ENCODE measurements at regions of chr17 and their contacts with region 1.

Region 1: DNA sequence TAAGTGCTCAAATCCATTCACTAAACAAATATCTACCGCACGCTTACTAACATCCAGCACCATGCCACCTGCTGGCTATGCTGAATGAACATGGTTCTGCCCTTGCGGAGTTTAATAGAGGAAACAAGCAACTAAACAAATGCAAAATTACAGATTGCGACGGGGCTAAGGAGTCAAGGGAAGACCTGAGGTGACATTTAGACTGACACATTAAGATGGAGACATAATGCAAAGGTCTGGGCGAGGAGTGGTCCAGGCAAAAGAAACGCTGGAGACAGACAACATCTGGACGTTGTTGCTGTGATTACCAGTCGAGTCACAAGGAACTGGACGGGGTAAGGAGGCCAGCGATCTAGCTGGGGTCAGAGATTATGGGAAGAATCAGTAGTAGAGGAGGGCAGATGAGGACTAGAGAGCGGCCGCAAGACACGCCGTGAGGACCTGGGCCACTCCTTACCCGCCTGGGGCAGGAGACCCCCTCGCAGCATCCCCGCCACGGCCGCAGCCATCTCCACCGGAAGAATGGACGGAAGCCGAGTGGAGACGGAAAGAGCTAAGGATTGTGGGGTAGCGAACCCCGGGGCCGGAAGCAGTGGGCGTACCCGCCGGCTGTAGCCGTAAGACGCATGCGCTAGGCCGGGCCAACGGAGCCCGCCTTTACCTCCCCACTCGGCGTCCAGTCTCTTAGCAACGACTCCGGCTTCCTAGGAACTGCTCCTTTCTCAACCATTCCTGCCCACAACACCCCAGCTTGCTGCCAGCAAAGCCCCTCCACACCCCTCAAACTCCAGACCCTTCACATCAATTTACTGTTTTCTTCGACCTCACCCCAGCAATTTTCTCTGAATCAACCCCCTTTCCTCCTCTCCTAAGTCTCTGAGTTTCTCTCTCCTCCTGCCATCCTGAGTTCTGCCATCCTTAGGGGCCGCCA is at the starts of genes LRRC46 and MRPL10:
- DNase-seq: peak; percentile 97 to 99
- H3K4me3 ChIP-seq: peak within 1 kb of the TSS; percentile 54
- H3K4me3 Mint-ChIP-seq: peak within 1 kb of the TSS; percentile 89
- H3K27ac Mint-ChIP-seq: peak within 1 kb of the TSS; percentile 84
- H3K4me1 ChIP-seq: peaks cover 9% of the 10 kb centered on the region
- H3K4me1 Mint-ChIP-seq: peaks cover 16% of the 10 kb centered on the region
- H3K27me3 ChIP-seq: no peaks in the 10 kb centered on the region
- H3K27me3 Mint-ChIP-seq: no peaks in the 10 kb centered on the region
- CTCF ChIP-seq: peak; percentile 54 to 80
- total RNA-seq, gene LRRC46: 1.4 and 2.3 TPM in 2 replicates
- total RNA-seq, gene MRPL10: 159 and 162 TPM in 2 replicates

Region 2: GRCh38 chr17:47120521-47121095 is 710.7 kb before region 1 on chr17:
- CTCF ChIA-PET with region 1: no interaction called
- POLR2A ChIA-PET with region 1: interaction called, 15 read pairs
- intact Hi-C with region 1: no loop called
- DNase-seq: no peak
- H3K4me3 ChIP-seq: no peak overlapping the region
- H3K4me3 Mint-ChIP-seq: no peak overlapping the region
- H3K27ac Mint-ChIP-seq: no peak overlapping the region
- H3K4me1 ChIP-seq: no peaks in the 10 kb centered on the region
- H3K4me1 Mint-ChIP-seq: no peaks in the 10 kb centered on the region
- H3K27me3 ChIP-seq: no peaks in the 10 kb centered on the region
- H3K27me3 Mint-ChIP-seq: no peaks in the 10 kb centered on the region
- CTCF ChIP-seq: no peak

Region 3: GRCh38 chr17:47733047-47733673 is 98.1 kb before region 1 on chr17 and contains the start of gene TBX21:
- CTCF ChIA-PET with region 1: interaction called, 10 read pairs
- POLR2A ChIA-PET with region 1: interaction called, 4 read pairs
- intact Hi-C with region 1: no loop called
- DNase-seq: peak; percentile 93 to 94
- H3K4me3 ChIP-seq: peak within 1 kb of the TSS; percentile 37
- H3K4me3 Mint-ChIP-seq: peak within 1 kb of the TSS; percentile 68
- H3K27ac Mint-ChIP-seq: no peak within 1 kb of the TSS
- H3K4me1 ChIP-seq: peaks cover 9% of the 10 kb centered on the region
- H3K4me1 Mint-ChIP-seq: peaks cover 7% of the 10 kb centered on the region
- H3K27me3 ChIP-seq: peaks cover 18% of the 10 kb centered on the region
- H3K27me3 Mint-ChIP-seq: peaks cover 45% of the 10 kb centered on the region
- CTCF ChIP-seq: peak; percentile 55 to 89
- total RNA-seq, gene TBX21: not detected in 2 replicates

Region 4: DNA sequence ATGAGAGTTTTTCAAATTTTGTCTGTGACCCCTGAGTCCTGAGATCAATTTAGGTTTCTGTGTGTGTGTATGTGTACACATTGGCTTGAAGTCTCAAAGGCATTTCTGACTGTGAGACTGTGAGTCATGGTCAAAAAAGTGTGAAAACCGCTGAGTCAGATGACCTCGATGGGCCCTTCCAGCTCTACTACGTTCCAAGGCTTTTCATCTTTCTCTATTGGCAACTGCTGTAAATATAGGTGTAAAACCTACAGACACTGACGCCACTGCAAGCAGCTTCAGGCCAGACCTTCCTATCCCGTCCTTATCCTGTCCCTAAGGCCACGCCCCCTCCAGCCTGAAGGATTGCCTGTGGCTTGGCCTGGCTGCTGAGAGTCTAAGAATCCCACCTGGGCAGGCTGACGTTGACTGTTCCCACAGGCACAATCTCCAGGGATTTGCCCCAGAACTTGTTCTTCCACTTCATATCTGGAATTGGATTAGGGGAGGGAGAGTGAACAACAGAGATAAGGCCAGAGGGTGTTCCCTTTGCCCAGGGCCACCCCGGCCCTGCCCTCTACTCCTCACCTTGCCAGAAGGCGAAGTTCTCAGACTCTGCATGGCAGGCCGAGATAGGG is 21.0 kb before region 1 on chr17:
- CTCF ChIA-PET with region 1: interaction called, 20 read pairs
- POLR2A ChIA-PET with region 1: interaction called, 25 read pairs
- intact Hi-C with region 1: loop called (anchors 1 kb)
- DNase-seq: peak; percentile 100
- H3K4me3 ChIP-seq: no peak overlapping the region
- H3K4me3 Mint-ChIP-seq: peak overlapping the region; percentile 56
- H3K27ac Mint-ChIP-seq: peak overlapping the region; percentile 93
- H3K4me1 ChIP-seq: peaks cover 36% of the 10 kb centered on the region
- H3K4me1 Mint-ChIP-seq: peaks cover 36% of the 10 kb centered on the region
- H3K27me3 ChIP-seq: no peaks in the 10 kb centered on the region
- H3K27me3 Mint-ChIP-seq: no peaks in the 10 kb centered on the region
- CTCF ChIP-seq: no peak

Region 5: GRCh38 chr17:47889734-47890529 is 58.7 kb after region 1 on chr17:
- CTCF ChIA-PET with region 1: interaction called, 18 read pairs
- POLR2A ChIA-PET with region 1: interaction called, 14 read pairs
- intact Hi-C with region 1: no loop called
- DNase-seq: peak; percentile 97 to 99
- H3K4me3 ChIP-seq: no peak overlapping the region
- H3K4me3 Mint-ChIP-seq: no peak overlapping the region
- H3K27ac Mint-ChIP-seq: no peak overlapping the region
- H3K4me1 ChIP-seq: peaks cover 23% of the 10 kb centered on the region
- H3K4me1 Mint-ChIP-seq: peaks cover 31% of the 10 kb centered on the region
- H3K27me3 ChIP-seq: no peaks in the 10 kb centered on the region
- H3K27me3 Mint-ChIP-seq: no peaks in the 10 kb centered on the region
- CTCF ChIP-seq: peak; percentile 100

Region 6: DNA sequence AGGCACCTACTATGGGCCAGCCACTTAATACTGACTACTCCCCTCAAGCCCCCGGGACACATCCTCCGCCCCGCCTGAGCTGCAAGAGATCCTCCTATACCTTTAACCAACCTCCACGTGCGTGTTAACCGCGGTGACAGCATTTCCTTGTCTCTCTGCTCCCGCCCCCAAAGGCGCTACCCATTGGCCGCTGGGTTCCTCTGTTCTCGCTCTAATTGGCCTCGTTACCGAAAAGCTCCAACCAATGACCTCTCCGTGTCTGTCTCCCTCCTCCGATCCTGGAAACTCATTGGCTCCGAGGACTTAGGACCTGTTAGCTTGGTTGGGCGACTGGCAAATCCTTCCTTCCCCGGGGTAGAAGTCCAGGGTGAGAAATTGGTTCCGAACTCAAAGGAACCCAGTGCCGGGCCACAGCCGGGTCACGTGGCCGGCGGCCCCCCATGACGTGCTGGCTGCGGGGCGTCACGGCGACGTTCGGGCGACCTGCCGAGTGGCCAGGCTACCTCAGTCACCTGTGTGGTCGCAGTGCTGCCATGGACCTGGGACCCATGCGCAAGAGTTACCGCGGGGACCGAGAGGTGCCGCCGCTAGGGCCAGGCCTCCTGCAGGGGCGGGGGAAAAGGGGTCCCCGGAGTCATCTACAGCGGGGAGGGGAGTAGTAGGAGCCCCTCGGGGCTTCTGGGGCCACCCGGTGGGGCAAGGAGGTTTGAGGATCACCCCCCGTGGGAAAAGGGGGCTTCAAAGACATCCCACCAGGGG is 110.1 kb after region 1 on chr17 and contains the start of gene PNPO:
- CTCF ChIA-PET with region 1: interaction called, 7 read pairs
- POLR2A ChIA-PET with region 1: interaction called, 14 read pairs
- intact Hi-C with region 1: no loop called
- DNase-seq: peak; percentile 100
- H3K4me3 ChIP-seq: peak within 1 kb of the TSS; percentile 69
- H3K4me3 Mint-ChIP-seq: peak within 1 kb of the TSS; percentile 82
- H3K27ac Mint-ChIP-seq: peak within 1 kb of the TSS; percentile 75
- H3K4me1 ChIP-seq: peaks cover 12% of the 10 kb centered on the region; the same call in 1 of the 2 replicates
- H3K4me1 Mint-ChIP-seq: peaks cover 23% of the 10 kb centered on the region
- H3K27me3 ChIP-seq: no peaks in the 10 kb centered on the region
- H3K27me3 Mint-ChIP-seq: no peaks in the 10 kb centered on the region
- CTCF ChIP-seq: peak; percentile 45 to 48
- total RNA-seq, gene PNPO: 110 and 118 TPM in 2 replicates

Region 7: GRCh38 chr17:48107168-48108132 is 276.2 kb after region 1 on chr17 and contains the start of gene SNX11:
- CTCF ChIA-PET with region 1: no interaction called
- POLR2A ChIA-PET with region 1: no interaction called
- intact Hi-C with region 1: loop called (anchors 10 kb)
- DNase-seq: peak; percentile 100
- H3K4me3 ChIP-seq: peak within 1 kb of the TSS; percentile 60
- H3K4me3 Mint-ChIP-seq: peak within 1 kb of the TSS; percentile 95
- H3K27ac Mint-ChIP-seq: peak within 1 kb of the TSS; percentile 95
- H3K4me1 ChIP-seq: 0 out of 2 replicates have a peak, but pooled peaks cover 6% of the 10 kb centered on the region
- H3K4me1 Mint-ChIP-seq: peaks cover 7% of the 10 kb centered on the region
- H3K27me3 ChIP-seq: no peaks in the 10 kb centered on the region
- H3K27me3 Mint-ChIP-seq: no peaks in the 10 kb centered on the region
- CTCF ChIP-seq: peak; percentile 33 to 48
- total RNA-seq, gene SNX11: 36.7 and 40.7 TPM in 2 replicates

Measured in Caco-2 (cell line).